MCF 10A (cell line): ENCODE measurements at regions of chr1 and their contacts with region 1.

Region 1: GRCh38 chr1:234309598-234310459 is 63.4 kb upstream of the COA6 start:
- DNase-seq: peak; percentile 89
- H3K4me3 Mint-ChIP-seq: no peak overlapping the region
- H3K27ac Mint-ChIP-seq: no peak overlapping the region
- H3K4me1 Mint-ChIP-seq: peaks cover 2% of the 10 kb centered on the region
- H3K27me3 Mint-ChIP-seq: no peaks in the 10 kb centered on the region
- CTCF ChIP-seq: peak; percentile 99

Region 2: GRCh38 chr1:233394860-233395717 is 914.7 kb before region 1 on chr1:
- CTCF ChIA-PET with region 1: interaction called, 11 read pairs
- POLR2A ChIA-PET with region 1: no interaction called
- intact Hi-C with region 1: no loop called
- DNase-seq: peak; percentile 81
- H3K4me3 Mint-ChIP-seq: no peak overlapping the region
- H3K27ac Mint-ChIP-seq: no peak overlapping the region
- H3K4me1 Mint-ChIP-seq: no peaks in the 10 kb centered on the region
- H3K27me3 Mint-ChIP-seq: no peaks in the 10 kb centered on the region
- CTCF ChIP-seq: peak; percentile 98

Region 3: DNA sequence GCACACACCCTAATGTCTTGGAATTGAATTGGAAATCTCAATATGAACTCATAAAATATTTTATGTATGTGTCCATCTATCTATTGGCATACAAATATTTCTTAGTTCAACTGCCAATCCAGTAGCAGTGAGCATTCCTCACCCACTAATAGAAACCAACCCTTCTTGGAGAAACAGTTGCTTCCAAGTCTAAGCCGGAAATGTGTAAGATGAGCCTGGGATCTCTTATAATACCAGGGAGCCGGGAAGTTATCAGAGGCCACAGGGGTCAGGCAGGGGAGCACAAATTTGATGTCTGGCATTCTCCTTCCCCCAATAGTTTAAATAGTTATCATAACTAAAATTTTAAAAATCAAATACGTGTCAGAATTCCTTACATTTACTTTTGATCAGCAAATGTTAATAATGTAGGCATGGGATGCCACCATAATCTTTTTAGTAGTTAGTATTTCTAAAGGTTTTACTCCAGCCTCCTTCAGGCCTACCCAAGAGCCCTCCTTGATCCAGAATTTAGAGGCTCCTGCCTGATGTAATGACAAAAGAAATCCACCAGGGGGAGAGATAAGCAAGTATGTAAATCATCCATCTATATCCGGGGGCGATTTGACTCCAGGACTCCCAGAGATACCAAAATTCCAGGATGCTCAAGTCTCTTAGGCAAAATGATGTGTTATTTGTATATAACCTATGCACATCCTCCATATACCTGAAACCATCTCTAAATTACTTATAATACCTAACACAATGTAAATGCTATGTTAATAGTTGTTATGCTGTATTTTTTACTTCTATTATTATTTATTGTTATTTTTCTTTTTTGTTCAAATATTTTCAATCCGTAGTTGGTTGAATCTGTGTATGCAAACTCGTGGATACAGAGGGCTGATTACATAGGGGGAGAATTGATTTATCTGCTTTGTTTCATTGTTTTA is 155.2 kb before region 1 on chr1:
- CTCF ChIA-PET with region 1: interaction called, 220 read pairs
- POLR2A ChIA-PET with region 1: interaction called, 3 read pairs
- intact Hi-C with region 1: loop called (anchors 1 kb)
- DNase-seq: peak; percentile 94
- H3K4me3 Mint-ChIP-seq: no peak overlapping the region
- H3K27ac Mint-ChIP-seq: peak overlapping the region; percentile 20
- H3K4me1 Mint-ChIP-seq: peaks cover 2% of the 10 kb centered on the region
- H3K27me3 Mint-ChIP-seq: no peaks in the 10 kb centered on the region
- CTCF ChIP-seq: peak; percentile 99

Region 4: GRCh38 chr1:234188454-234188792 is 121.4 kb before region 1 on chr1:
- CTCF ChIA-PET with region 1: interaction called, 18 read pairs
- POLR2A ChIA-PET with region 1: no interaction called
- intact Hi-C with region 1: no loop called
- DNase-seq: peak; percentile 59
- H3K4me3 Mint-ChIP-seq: no peak overlapping the region
- H3K27ac Mint-ChIP-seq: no peak overlapping the region
- H3K4me1 Mint-ChIP-seq: peaks cover 22% of the 10 kb centered on the region
- H3K27me3 Mint-ChIP-seq: no peaks in the 10 kb centered on the region
- CTCF ChIP-seq: peak; percentile 33

Region 5: DNA sequence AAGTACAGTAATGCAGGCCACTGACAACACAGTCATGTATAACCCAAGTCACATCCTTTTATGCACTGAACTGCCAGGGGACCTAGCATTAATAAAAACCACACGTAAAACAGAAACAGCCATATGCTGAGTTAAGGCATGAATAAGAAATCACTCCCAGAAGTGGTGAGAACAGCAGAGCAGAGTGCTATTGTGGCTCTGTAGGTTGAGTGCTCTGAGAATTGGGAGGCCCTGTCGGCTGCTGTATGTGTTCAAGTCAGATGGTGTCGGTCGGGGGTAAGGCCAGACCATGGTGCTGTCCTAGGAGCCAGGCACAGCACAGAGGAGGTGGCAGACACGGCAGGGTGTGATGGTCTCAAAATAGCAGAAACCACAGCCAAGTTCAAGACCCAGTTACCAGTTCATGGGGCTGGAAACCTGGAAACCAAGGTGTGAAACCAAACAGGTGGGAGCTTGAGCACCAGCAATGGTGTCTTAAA is 63.2 kb before region 1 on chr1:
- CTCF ChIA-PET with region 1: interaction called, 32 read pairs
- POLR2A ChIA-PET with region 1: no interaction called
- intact Hi-C with region 1: no loop called
- DNase-seq: no peak
- H3K4me3 Mint-ChIP-seq: no peak overlapping the region
- H3K27ac Mint-ChIP-seq: no peak overlapping the region
- H3K4me1 Mint-ChIP-seq: no peaks in the 10 kb centered on the region
- H3K27me3 Mint-ChIP-seq: no peaks in the 10 kb centered on the region
- CTCF ChIP-seq: no peak

Region 6: GRCh38 chr1:234288946-234289345 is 20.9 kb before region 1 on chr1:
- CTCF ChIA-PET with region 1: interaction called, 105 read pairs
- POLR2A ChIA-PET with region 1: no interaction called
- intact Hi-C with region 1: no loop called
- DNase-seq: no peak
- H3K4me3 Mint-ChIP-seq: no peak overlapping the region
- H3K27ac Mint-ChIP-seq: no peak overlapping the region
- H3K4me1 Mint-ChIP-seq: no peaks in the 10 kb centered on the region
- H3K27me3 Mint-ChIP-seq: no peaks in the 10 kb centered on the region
- CTCF ChIP-seq: no peak

Region 7: DNA sequence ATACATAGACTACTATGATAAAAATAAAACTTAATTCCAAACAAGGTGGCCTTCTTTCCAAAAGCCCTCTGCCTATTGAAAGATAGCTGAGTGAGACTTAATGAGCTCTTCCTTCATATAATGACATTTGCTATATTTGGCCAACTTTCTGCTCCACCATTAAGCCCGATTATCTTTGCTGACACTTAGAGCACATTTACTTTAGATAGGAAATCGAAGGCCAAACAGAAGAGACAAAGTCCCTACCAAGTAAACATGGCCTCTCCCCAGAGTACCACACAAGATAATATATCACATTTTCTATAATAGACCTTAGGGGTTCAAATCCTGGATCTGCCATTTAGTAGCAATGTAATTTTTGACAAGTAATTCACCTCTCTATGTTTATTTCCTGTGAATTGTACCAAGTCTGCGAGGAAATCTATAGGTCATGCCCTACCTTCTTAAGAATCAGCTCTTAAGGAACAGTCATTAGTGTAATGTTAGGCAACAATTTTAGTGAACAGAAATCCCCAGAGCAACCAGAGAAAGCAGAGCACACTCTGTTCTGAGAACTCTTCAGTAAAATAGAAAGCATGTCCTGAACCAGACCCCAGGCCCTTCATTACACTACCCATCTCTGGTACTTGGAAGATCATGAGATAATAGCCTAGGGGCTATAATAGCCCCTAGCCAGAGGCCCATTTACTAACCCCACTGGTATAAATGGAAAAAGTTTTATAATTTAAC is 46.1 kb after region 1 on chr1:
- CTCF ChIA-PET with region 1: interaction called, 11 read pairs
- POLR2A ChIA-PET with region 1: interaction called, 7 read pairs
- intact Hi-C with region 1: no loop called
- DNase-seq: no peak
- H3K4me3 Mint-ChIP-seq: peak overlapping the region; percentile 86
- H3K27ac Mint-ChIP-seq: peak overlapping the region; percentile 89
- H3K4me1 Mint-ChIP-seq: peaks cover 12% of the 10 kb centered on the region
- H3K27me3 Mint-ChIP-seq: no peaks in the 10 kb centered on the region
- CTCF ChIP-seq: no peak